ENCODE measurements at regions of chr16 and their contacts with region 1.

Region 1: DNA sequence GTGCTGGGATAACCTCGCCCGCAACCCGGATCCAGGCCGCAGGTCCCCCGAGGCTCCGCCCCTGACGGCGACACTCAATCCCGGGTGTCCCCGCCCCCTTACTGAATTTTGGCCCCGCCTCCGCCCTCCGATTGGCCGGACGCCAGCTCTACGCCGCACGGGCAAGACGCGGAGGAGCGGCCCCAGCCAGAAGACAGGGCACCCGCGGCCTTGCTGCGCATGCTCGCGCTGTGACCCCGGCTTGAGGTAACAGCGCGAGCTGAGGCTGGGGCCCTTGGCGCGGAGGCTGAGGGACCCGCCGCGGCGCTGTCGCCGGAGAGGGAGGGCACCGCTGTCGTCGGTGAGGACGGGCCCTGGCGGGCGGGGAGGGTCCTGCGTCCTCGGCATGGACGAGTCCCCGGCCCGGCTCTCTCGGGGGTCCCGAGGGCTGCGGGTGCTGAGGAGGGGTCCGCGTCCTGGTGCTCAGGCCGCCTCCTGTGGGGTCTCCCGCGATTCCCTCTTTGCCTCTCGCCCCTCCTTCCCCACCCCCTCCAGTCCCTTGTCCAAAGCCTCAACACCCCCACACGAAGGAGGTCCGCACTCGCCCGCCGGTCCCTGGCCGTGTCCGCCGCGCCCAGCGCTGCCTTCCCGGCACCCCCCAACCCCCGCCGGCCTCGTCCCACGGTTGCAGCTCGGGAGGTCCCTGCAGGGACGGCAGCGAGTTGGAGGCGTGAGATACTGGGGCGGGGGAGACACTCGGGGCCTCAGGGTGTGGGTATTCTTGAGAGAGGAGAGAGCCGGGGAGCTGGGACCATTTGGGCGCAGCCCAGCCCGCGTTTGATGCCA is at the start of gene FLYWCH2:
- DNase-seq: peak; percentile 98 to 100 (median 99)
- ATAC-seq: peak; percentile 77
- H3K4me3 ChIP-seq: peak within 1 kb of the TSS; percentile 75
- H3K4me3 Mint-ChIP-seq: peak within 1 kb of the TSS; percentile 93
- H3K27ac ChIP-seq: peak within 1 kb of the TSS; percentile 89 to 93
- H3K27ac Mint-ChIP-seq: peak within 1 kb of the TSS; percentile 99
- H3K4me1 ChIP-seq: peaks cover 16% of the 10 kb centered on the region
- H3K4me1 Mint-ChIP-seq: peaks cover 13% of the 10 kb centered on the region
- H3K27me3 ChIP-seq: no peaks in the 10 kb centered on the region
- H3K27me3 Mint-ChIP-seq: no peaks in the 10 kb centered on the region
- CTCF ChIP-seq: no peak
- total RNA-seq, gene FLYWCH2: 7.8 to 8.1 TPM

Region 2: DNA sequence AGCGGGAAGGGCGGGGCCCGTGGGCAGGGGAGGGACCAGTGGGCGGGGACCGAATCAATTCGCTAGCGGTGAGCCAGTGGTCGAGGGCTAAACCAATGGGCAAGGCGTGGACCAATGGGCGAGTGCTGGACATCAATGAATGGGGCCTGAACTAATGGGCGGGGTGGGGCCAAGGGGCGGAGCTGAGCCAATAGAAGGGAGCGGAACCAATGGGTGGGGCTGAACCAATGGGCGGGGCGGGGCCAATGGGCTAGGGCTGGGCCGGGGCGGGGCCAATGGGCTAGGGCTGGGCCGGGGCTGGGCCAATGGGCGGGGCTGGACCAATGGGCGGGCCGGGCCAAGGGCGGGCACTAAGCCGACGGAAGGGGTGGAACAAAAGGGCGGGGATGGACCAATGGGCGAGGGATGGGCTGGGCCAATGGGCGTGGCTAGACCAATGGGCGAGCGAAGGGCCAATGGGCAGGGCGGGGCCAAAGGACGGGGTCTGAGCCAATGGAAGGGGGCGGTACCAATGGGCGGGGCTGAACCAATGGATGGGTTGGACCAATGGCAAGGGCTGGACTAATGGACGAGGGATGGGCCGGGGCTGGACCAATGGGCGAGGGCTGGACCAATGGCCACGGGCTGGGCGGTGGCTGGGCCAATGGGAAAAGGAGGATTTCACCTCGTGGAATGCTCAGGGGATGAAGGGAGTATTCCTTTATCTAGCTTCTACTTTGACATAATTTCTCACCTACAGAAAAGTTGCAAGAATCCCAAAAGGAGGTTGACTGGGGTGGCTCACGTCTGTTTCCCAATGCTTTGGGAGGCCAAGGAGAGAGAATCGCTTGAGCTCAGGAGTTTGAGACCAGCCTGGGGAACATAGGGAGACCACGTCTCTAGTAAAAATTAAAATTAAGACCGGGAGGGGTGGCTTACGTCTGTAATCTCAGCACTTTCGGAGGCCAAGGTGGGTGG is 22.5 kb after region 1 on chr16:
- CTCF ChIA-PET with region 1: interaction called, 6 read pairs
- POLR2A ChIA-PET with region 1: interaction called, 60 read pairs
- intact Hi-C with region 1: loop called (anchors 2 kb)
- DNase-seq: peak; percentile 59 to 97 (median 83)
- ATAC-seq: peak; percentile 77
- H3K4me3 ChIP-seq: peak overlapping the region; percentile 94
- H3K4me3 Mint-ChIP-seq: peak overlapping the region; percentile 94
- H3K27ac ChIP-seq: peak overlapping the region in 1 of 2 donors; percentile 10
- H3K27ac Mint-ChIP-seq: no peak overlapping the region
- H3K4me1 ChIP-seq: peaks cover 32% of the 10 kb centered on the region
- H3K4me1 Mint-ChIP-seq: peaks cover 37% of the 10 kb centered on the region
- H3K27me3 ChIP-seq: no peaks in the 10 kb centered on the region
- H3K27me3 Mint-ChIP-seq: no peaks in the 10 kb centered on the region
- CTCF ChIP-seq: no peak

Region 3: DNA sequence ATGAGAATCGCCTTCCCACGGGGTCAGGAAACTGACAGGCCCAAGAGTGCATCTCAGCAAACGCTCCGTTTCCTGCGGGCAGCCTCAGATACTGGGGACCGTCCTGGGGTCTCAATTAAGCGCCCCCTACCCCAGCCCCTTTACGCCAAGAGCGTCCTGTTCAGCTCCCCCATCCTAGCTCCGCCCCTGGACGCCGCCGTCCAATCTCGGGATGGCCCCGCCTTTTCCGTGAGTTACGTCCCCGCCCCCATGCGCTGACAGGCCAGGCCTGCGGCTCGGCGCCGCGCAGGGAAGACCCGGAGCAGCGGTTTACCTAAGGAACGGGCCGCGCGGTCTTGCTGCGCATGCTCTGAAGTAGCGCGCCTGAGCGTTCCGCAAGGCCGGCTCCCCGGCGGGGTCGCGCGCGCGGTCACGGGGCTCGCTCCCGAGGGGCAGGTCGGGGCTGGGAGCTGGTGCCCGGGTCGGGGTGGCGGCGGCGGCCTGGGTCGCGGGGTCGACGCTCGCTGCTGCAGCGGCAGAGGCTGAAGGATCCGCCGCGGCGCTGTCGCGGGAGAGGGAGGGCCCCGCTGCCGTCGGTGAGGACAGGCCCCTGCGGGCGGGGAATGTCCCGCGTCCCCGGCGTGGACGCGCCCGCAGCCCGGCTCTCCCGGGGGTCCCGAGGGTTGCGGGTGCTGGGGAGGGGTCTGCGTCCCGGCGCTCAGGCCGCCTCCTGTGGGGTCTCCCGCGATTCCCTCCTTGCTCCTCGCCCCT is 28.5 kb after region 1 on chr16 and contains the start of gene FLYWCH1:
- CTCF ChIA-PET with region 1: no interaction called
- POLR2A ChIA-PET with region 1: interaction called, 60 read pairs
- intact Hi-C with region 1: loop called in 1 of 2 experiments (anchors 5 kb)
- DNase-seq: peak; percentile 97 to 99 (median 98)
- ATAC-seq: peak; percentile 96
- H3K4me3 ChIP-seq: peak within 1 kb of the TSS; percentile 75
- H3K4me3 Mint-ChIP-seq: peak within 1 kb of the TSS; percentile 96
- H3K27ac ChIP-seq: peak within 1 kb of the TSS; percentile 46 to 70
- H3K27ac Mint-ChIP-seq: peak within 1 kb of the TSS; percentile 83
- H3K4me1 ChIP-seq: peaks cover 21% of the 10 kb centered on the region
- H3K4me1 Mint-ChIP-seq: peaks cover 33% of the 10 kb centered on the region
- H3K27me3 ChIP-seq: no peaks in the 10 kb centered on the region
- H3K27me3 Mint-ChIP-seq: no peaks in the 10 kb centered on the region
- CTCF ChIP-seq: no peak
- total RNA-seq, gene FLYWCH1: 84.8 to 97.0 TPM